Activated T-helper 2 cell treated with anti-CD3 and anti-CD28 coated beads, Interferon-gamma antibody, Interleukin-2, Interleukin-4, amounts not matched to agents 10 μg/mL and 5 μg/mL and 100 μg/mL, durations not matched to agents 14 hours and 24 hours and 36 hours (primary cell): ENCODE measurements at regions of chr1 and their contacts with region 1.

Region 1: GRCh38 chr1:209674957-209675564 is at the start of gene G0S2:
- DNase-seq: no peak
- H3K4me3 Mint-ChIP-seq: peak within 1 kb of the TSS; percentile 72
- H3K27ac Mint-ChIP-seq: peak within 1 kb of the TSS; percentile 82
- H3K4me1 Mint-ChIP-seq: peaks cover 70% of the 10 kb centered on the region
- H3K27me3 Mint-ChIP-seq: peaks cover 28% of the 10 kb centered on the region
- total RNA-seq, gene G0S2: 49.3 and 49.4 TPM in 2 replicates

Region 2: GRCh38 chr1:209659909-209660308 is 15.2 kb before region 1 on chr1:
- intact Hi-C with region 1: loop called (anchors 1 kb)
- DNase-seq: no peak
- H3K4me3 Mint-ChIP-seq: peak overlapping the region; percentile 16
- H3K27ac Mint-ChIP-seq: peak overlapping the region; percentile 79
- H3K4me1 Mint-ChIP-seq: peaks cover 25% of the 10 kb centered on the region
- H3K27me3 Mint-ChIP-seq: no peaks in the 10 kb centered on the region

Region 3: DNA sequence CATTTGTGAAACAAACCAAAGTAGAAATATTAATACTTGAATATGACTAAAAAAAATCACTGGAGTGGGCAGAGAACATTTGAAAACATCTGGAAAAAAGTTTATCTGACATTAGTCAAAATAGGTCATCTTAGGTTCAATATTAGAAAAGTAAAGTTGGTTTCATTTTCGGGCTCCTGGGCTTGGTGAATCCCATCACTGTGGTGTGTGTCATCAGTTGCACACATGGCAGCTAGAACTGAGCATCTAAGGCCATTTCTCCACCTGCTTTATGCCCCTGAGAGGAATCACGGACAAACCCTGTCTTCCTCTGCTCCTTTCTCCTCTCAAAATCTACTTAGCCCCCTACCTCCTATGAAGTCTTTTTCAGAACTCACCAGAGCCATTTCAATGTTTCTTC is 35.0 kb after region 1 on chr1:
- intact Hi-C with region 1: loop called (anchors 2 kb)
- DNase-seq: no peak
- H3K4me3 Mint-ChIP-seq: peak overlapping the region; percentile 10
- H3K27ac Mint-ChIP-seq: peak overlapping the region; percentile 92
- H3K4me1 Mint-ChIP-seq: peaks cover 79% of the 10 kb centered on the region
- H3K27me3 Mint-ChIP-seq: no peaks in the 10 kb centered on the region

Region 4: GRCh38 chr1:209827384-209828262 is 152.6 kb after region 1 on chr1 and contains the start of gene UTP25:
- intact Hi-C with region 1: loop called (anchors 5 kb)
- DNase-seq: peak; percentile 89
- H3K4me3 Mint-ChIP-seq: peak within 1 kb of the TSS; percentile 89
- H3K27ac Mint-ChIP-seq: peak within 1 kb of the TSS; percentile 86
- H3K4me1 Mint-ChIP-seq: peaks cover 47% of the 10 kb centered on the region
- H3K27me3 Mint-ChIP-seq: peaks cover 6% of the 10 kb centered on the region
- total RNA-seq, gene UTP25: 18.7 and 19.6 TPM in 2 replicates